ENCODE measurements at regions of chr13 and their contacts with region 1.

Region 1: DNA sequence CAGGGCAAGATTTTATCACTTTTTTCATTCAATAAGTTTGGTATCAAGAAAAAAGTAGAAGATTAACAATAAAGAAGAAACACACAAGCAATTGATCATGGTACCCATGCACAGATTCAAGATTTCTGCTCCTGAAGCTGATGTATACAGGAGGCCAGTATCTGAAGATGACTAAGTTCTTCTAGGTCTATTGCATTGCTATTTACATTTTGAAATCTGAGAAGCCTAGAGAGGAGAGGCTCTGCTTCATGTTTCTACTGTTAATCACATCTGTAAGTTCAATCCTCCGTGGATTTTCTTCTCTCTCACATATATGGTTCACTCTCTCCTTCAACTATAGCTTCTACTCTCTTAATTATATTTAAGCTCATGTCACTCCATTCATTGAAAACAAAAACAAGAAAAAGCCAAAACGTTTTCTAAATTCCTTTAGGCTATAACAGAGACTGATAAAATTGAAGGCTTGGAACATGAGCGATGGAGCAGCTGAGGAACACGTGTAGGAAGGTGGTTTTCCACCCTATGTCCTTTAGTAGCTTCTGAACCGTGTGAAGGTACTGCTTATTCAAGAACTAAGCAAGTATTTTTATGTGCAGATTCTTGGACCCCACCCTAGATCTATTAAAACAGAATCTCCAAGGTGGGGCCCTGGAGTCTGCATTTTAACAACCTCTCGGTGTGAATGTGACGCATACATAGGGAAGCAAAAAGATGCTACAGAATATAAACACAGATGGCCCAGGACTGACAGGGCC is 198.2 kb downstream of the EFNB2 start:
- DNase-seq: no peak
- H3K4me3 ChIP-seq: no peak overlapping the region
- H3K27ac ChIP-seq: no peak overlapping the region
- H3K4me1 ChIP-seq: no peaks in the 10 kb centered on the region
- H3K27me3 ChIP-seq: no peaks in the 10 kb centered on the region
- CTCF ChIP-seq: no peak

Region 2: DNA sequence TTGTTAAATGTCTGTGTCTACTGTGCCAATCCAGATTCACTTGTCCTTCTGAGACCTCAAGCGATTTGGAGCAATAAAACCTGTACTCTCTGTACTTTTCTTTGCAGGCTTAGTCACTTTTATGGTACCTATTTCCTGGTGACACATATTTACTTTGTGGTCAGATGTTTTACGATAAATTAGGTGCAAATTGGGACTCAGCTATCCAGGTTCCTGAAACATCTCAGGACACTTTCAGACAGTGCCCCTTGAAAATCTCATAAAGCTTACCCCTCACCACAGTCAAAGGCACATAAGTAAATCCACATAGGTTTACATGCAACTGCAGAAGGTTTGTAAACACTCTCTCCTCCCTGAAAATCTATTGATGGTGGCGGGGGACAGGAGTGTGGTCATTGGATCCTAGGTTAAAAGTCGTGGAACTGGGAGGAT is 240.6 kb before region 1 on chr13:
- intact Hi-C with region 1: loop called (anchors 10 kb)
- DNase-seq: no peak
- H3K4me3 ChIP-seq: no peak overlapping the region
- H3K27ac ChIP-seq: peak overlapping the region; percentile 92
- H3K4me1 ChIP-seq: peaks cover 10% of the 10 kb centered on the region
- H3K27me3 ChIP-seq: no peaks in the 10 kb centered on the region
- CTCF ChIP-seq: no peak

Region 3: GRCh38 chr13:106651442-106651841 is 314.2 kb after region 1 on chr13:
- intact Hi-C with region 1: no loop called
- DNase-seq: no peak
- H3K4me3 ChIP-seq: no peak overlapping the region
- H3K27ac ChIP-seq: no peak overlapping the region
- H3K4me1 ChIP-seq: no peaks in the 10 kb centered on the region
- H3K27me3 ChIP-seq: no peaks in the 10 kb centered on the region
- CTCF ChIP-seq: no peak

Measured in colonic mucosa (tissue), 4 donors.